ENCODE measurements at regions of chr17 and their contacts with region 1.

Region 1: GRCh38 chr17:65100316-65101140 is 36.6 kb upstream of the RGS9 start:
- DNase-seq: peak; percentile 77
- ATAC-seq: peak; percentile 93
- H3K4me3 ChIP-seq: peak overlapping the region; percentile 78
- H3K27ac ChIP-seq: peak overlapping the region; percentile 87
- H3K4me1 ChIP-seq: peaks cover 12% of the 10 kb centered on the region
- H3K27me3 ChIP-seq: no peaks in the 10 kb centered on the region
- CTCF ChIP-seq: peak; percentile 77 to 82 (median 82)
- EP300 ChIP-seq: no peak
- POLR2A ChIP-seq: peak; percentile 53; the same call in 1 of the 2 replicates
- RAD21 ChIP-seq: peak; percentile 76

Region 2: DNA sequence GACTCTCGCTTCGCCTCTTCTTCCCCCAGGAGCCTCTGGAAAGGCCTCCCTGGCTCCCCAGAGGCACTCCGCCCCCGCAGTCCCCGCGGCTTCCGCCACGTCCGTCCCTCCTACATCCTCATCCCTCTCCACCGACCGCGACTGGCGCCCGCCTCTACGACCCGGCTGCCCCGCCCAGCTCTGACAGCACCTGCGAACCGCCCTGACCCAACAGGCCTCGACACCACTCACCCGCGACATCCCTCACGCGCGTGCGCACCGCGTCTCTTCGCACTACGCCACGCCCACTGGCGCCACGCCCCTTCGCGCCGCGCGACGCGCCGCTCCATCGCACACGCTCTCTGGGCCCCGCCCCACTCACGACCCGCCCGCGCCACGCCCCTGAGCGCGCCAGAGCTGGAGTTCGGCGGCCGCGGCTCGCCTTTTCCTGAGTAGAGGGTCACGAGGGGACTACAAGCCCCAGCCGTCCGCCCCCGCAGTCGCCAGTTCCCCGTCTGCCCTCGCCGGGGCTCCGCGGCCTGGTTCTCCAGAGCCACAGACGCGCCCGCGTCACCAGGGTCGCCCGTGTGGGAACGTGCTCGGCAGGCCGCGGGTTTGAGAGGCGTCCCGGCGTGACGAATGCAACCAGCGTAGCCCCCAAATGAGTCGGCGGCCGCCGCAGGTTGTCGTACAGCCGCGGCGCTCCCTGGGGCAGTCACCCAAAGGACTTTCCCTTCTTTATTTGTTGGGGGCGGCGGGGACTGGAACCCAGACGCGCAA is 125.0 kb before region 1 on chr17:
- CTCF ChIA-PET with region 1: interaction called, 6 read pairs
- POLR2A ChIA-PET with region 1: interaction called, 3 read pairs
- RAD21 ChIA-PET with region 1: interaction called, 19 read pairs
- SMC1A ChIA-PET with region 1: interaction called, 13 read pairs
- in situ Hi-C with region 1: no loop called
- intact Hi-C with region 1: loop called (anchors 2 kb)
- DNase-seq: peak; percentile 95
- ATAC-seq: peak; percentile 87
- H3K4me3 ChIP-seq: peak overlapping the region; percentile 85
- H3K27ac ChIP-seq: peak overlapping the region; percentile 93
- H3K4me1 ChIP-seq: peaks cover 31% of the 10 kb centered on the region
- H3K27me3 ChIP-seq: no peaks in the 10 kb centered on the region
- CTCF ChIP-seq: no peak
- EP300 ChIP-seq: peak; percentile 59 to 64; a peak in 2 of 4 replicates
- POLR2A ChIP-seq: peak; percentile 83
- RAD21 ChIP-seq: no peak

Region 3: GRCh38 chr17:65027305-65027704 is 73.2 kb before region 1 on chr17:
- CTCF ChIA-PET with region 1: interaction called, 30 read pairs
- POLR2A ChIA-PET with region 1: interaction called, 4 read pairs
- RAD21 ChIA-PET with region 1: interaction called, 5 read pairs
- SMC1A ChIA-PET with region 1: interaction called, 11 read pairs
- in situ Hi-C with region 1: no loop called
- intact Hi-C with region 1: loop called (anchors 2 kb)
- DNase-seq: peak; percentile 45
- ATAC-seq: peak; percentile 66
- H3K4me3 ChIP-seq: no peak overlapping the region
- H3K27ac ChIP-seq: peak overlapping the region; percentile 84
- H3K4me1 ChIP-seq: peaks cover 70% of the 10 kb centered on the region
- H3K27me3 ChIP-seq: no peaks in the 10 kb centered on the region
- CTCF ChIP-seq: peak; percentile 16 to 45 (median 42); a peak in 4 of 6 replicates
- EP300 ChIP-seq: peak; percentile 47; a peak in 2 of 4 replicates
- POLR2A ChIP-seq: no peak
- RAD21 ChIP-seq: peak; percentile 46

Region 4: DNA sequence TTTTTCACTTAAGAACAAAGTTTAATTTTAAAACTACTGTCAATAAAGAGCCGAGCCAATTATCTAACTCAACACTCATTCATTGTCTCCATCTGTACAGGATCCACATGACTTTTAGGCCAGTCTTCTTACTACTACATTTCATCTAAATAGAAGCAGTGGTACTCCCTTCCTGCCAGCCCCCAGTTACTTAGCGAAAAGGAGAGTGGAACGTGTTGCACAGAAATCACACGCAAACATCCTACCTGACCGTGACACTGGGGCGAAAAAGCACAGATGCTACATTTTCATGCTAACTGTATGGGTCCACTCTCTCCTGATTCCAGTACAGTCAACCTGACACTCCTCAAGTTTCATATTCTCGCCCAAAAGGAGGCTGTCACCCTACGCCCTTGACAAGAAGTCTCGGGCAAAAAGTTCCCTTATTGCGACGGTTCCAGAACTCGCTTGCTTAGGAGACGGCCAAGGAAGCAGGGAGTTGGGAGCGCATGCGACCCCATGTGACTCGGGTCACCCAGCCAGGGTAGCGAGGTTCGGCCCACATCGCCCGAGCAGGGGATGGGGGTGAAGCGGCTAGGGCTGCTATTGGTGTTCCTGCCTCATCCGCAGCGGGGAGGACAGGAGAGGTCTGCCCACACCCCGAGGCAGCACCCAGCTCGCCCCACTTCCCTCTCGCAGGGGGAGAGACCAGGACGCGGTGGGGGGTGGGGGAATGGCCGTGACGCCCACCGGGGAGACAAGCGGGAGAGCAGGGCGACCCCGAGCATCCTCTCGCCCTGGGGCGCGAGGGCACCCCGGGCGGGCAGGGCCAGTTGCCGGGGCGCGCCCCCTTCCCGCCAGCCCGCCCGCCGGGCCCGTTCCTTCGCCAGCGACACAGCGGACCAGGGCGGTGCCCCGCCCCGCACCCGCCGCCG is 44.9 kb before region 1 on chr17:
- CTCF ChIA-PET with region 1: interaction called, 4 read pairs
- POLR2A ChIA-PET with region 1: interaction called, 3 read pairs
- RAD21 ChIA-PET with region 1: interaction called, 18 read pairs
- SMC1A ChIA-PET with region 1: interaction called, 5 read pairs
- in situ Hi-C with region 1: no loop called
- intact Hi-C with region 1: loop called (anchors 2 kb)
- DNase-seq: no peak
- ATAC-seq: peak; percentile 65
- H3K4me3 ChIP-seq: peak overlapping the region; percentile 98
- H3K27ac ChIP-seq: peak overlapping the region; percentile 95
- H3K4me1 ChIP-seq: peaks cover 5% of the 10 kb centered on the region; the same call in 1 of the 2 replicates
- H3K27me3 ChIP-seq: no peaks in the 10 kb centered on the region
- CTCF ChIP-seq: no peak
- EP300 ChIP-seq: no peak
- POLR2A ChIP-seq: no peak; the same call in 1 of the 2 replicates
- RAD21 ChIP-seq: no peak

Region 5: DNA sequence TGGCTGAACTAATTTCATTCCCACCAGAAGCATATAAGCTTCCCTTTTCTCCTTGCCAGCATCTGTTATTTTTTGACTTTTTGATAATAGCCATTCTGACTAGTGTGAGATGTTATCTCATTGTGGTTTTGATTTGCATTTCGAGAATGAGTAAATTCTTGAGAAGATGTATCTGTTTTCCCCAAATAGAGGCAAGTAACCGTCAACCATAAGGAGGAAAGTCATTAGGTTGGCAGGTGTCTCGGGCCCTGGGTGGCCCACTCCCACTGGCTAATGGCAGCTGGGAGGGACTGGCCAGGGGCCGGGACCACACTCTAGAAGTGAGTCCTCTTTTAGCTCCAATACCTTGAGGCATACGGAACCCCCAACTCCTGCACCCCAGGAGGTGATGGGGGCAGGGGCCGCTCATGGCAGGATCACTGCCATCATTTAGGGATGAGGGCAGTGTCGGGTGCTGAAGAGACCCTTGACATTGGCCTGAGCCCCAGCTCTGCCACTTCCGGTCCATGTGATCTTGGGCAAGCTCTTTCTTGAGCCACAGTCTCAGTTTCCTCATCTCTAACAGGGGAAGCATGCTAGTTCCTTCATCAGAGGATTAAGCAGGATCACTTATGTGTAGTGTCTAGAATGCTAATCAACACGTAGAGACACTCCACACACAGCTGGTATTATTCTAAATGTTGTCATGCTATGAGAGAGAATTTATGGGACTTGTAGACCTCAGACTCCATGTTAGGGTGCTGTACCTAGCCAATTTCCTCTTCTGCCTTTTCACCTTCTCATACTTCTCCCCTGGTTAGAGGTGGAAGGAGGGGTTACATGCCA is 80.9 kb after region 1 on chr17:
- CTCF ChIA-PET with region 1: interaction called, 3 read pairs
- POLR2A ChIA-PET with region 1: no interaction called
- RAD21 ChIA-PET with region 1: interaction called, 4 read pairs
- SMC1A ChIA-PET with region 1: interaction called, 11 read pairs
- in situ Hi-C with region 1: no loop called
- intact Hi-C with region 1: loop called (anchors 1 kb)
- DNase-seq: peak; percentile 90
- ATAC-seq: peak; percentile 82
- H3K4me3 ChIP-seq: no peak overlapping the region
- H3K27ac ChIP-seq: peak overlapping the region; percentile 99
- H3K4me1 ChIP-seq: peaks cover 49% of the 10 kb centered on the region
- H3K27me3 ChIP-seq: no peaks in the 10 kb centered on the region
- CTCF ChIP-seq: no peak
- EP300 ChIP-seq: peak; percentile 81 to 93; a peak in 3 of 4 replicates
- POLR2A ChIP-seq: 0 out of 2 replicates have a peak, but pooled peaks have one; percentile 11
- RAD21 ChIP-seq: no peak

Region 6: DNA sequence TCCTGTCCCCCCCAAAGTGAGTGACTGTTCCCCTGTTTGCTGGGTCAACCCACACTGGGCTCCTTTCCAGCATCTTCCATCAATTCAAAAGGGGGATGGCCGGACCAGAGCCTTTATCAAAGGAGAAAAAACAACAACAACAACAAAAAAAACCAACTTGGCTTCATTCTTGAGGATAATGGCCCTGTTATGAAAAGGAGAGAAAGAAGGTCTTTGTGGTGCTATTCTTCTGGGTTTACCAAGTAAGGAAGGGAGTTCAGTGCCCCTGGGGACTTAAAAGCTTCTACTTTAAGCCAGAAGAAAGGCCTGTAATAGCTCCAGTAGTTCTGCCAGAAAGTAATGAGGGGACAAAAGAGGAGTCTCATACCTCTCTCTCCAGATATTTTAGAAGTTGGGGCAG is 108.2 kb after region 1 on chr17:
- CTCF ChIA-PET with region 1: no interaction called
- POLR2A ChIA-PET with region 1: no interaction called
- RAD21 ChIA-PET with region 1: no interaction called
- SMC1A ChIA-PET with region 1: no interaction called
- in situ Hi-C with region 1: no loop called
- intact Hi-C with region 1: no loop called
- DNase-seq: no peak
- ATAC-seq: no peak
- H3K4me3 ChIP-seq: no peak overlapping the region
- H3K27ac ChIP-seq: no peak overlapping the region
- H3K4me1 ChIP-seq: no peaks in the 10 kb centered on the region
- H3K27me3 ChIP-seq: peaks cover 0 to 1% of the 10 kb centered on the region in 2 experiments; a peak in 1 of 4 replicates
- CTCF ChIP-seq: no peak
- EP300 ChIP-seq: no peak
- POLR2A ChIP-seq: no peak
- RAD21 ChIP-seq: no peak